ENCODE measurements at regions of chr3 and their contacts with region 1.

Region 1: DNA sequence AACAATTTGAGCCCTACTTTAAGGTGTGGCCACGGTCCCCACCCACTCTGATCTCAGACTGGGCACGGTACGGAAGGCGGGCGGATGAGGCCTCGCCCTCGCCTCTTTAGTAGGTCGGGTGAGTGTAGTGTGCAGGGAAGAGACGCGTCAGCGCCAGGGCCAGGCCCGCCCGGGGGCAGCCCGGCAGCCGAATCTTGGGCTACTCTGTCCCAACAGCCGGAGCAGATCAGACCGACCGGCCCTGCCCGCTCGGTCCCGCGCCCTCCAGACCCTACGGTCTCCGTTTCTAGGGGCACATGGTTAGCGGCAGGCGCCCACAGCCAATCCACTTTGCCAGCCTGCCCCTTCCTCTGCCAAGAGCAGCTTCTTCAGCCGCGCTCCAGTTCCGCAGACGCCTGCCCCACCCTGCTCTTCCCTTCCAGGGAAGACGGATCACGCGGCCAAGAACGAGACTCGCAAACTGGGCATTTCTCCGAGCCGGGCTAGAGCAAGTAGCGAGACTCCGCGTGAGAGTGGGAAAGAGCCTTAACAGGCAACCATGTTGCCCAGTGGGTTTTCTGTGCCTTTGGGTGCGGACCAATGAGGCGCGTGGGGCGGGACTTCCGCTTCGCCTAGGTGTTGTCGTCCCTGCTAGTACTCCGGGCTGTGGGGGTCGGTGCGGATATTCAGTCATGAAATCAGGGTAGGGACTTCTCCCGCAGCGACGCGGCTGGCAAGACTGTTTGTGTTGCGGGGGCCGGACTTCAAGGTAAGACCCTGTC is at the start of gene RNF13:
- H3K4me3 Mint-ChIP-seq: peak within 1 kb of the TSS; percentile 79
- H3K27ac Mint-ChIP-seq: peak within 1 kb of the TSS; percentile 96
- H3K4me1 Mint-ChIP-seq: peaks cover 32% of the 10 kb centered on the region
- H3K27me3 Mint-ChIP-seq: no peaks in the 10 kb centered on the region

Region 2: GRCh38 chr3:149145974-149146373 is 666.8 kb before region 1 on chr3:
- intact Hi-C with region 1: loop called (anchors 10 kb)
- H3K4me3 Mint-ChIP-seq: no peak overlapping the region
- H3K27ac Mint-ChIP-seq: no peak overlapping the region
- H3K4me1 Mint-ChIP-seq: peaks cover 22% of the 10 kb centered on the region
- H3K27me3 Mint-ChIP-seq: no peaks in the 10 kb centered on the region

Region 3: DNA sequence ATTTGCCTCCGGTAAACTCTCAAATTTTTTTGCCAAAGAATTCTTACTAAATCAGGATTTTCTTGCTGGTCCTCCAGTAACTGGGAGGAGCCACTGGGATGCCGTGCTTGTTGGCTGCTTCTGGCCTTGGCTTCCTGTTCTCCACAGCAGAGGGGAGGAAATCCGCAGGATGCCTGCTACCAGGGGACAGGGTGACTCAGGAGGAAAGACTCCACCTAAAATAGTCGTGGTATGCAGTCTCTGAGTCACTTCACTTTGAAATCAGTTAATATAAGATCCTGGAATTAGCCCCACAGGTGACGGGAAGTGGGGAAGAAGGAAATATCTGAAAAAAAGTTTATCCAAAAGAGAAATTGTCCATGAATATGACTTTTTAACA is 472.9 kb before region 1 on chr3:
- intact Hi-C with region 1: no loop called
- H3K4me3 Mint-ChIP-seq: no peak overlapping the region
- H3K27ac Mint-ChIP-seq: no peak overlapping the region
- H3K4me1 Mint-ChIP-seq: peaks cover 26% of the 10 kb centered on the region
- H3K27me3 Mint-ChIP-seq: no peaks in the 10 kb centered on the region

Region 4: DNA sequence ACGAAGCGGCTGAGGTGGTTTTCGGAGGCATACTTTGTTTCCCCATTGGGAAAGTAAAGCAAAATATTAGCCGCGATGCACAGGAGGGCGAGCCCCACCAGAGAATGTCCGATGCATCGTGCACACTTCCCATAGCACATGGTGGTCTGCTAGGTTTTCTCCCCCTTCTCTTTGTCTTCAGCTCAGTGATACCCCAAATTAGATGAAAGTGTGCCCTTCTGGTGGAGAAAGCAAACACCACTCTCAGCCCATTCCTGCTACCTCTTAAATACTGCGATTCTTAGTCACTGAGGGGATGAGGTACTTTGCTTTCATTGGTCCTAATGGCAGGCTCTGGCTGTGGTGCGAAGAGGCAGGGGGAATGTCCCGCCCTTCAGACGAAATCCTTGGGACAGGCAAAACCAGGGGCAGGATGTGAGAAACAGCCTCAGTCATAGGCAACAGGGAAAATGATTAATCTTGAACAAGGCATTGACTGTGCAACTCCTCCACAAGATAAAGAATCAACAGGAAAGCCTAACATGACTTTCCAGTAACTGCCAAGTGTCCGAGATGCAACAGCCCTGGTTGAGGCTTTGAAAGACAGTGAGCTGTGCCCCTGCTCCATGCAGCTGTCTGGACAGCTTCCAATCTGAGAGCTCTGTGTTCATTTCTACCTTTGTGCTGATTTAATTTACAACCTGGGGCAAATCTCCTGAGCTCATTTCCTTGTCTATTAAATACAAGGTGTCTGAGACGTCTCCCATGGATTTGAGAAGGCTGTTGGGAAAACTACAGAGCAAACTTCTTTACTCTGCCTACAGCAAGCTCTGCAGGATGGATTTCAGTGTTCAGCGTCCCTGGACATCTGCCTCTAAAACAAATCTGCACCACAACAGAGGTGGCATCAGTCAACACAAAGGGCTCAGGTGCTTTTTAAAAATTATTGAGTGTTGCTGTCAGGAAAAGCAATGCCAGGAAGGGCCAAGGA is 435.1 kb before region 1 on chr3 and contains the start of gene TM4SF1:
- intact Hi-C with region 1: no loop called
- H3K4me3 Mint-ChIP-seq: peak within 1 kb of the TSS; percentile 13
- H3K27ac Mint-ChIP-seq: no peak within 1 kb of the TSS
- H3K4me1 Mint-ChIP-seq: peaks cover 33% of the 10 kb centered on the region
- H3K27me3 Mint-ChIP-seq: peaks cover 3% of the 10 kb centered on the region

Region 5: GRCh38 chr3:149736175-149736952 is 76.4 kb before region 1 on chr3:
- intact Hi-C with region 1: no loop called
- H3K4me3 Mint-ChIP-seq: no peak overlapping the region
- H3K27ac Mint-ChIP-seq: no peak overlapping the region
- H3K4me1 Mint-ChIP-seq: no peaks in the 10 kb centered on the region
- H3K27me3 Mint-ChIP-seq: peaks cover 2% of the 10 kb centered on the region

Region 6: GRCh38 chr3:149752051-149752787 is 60.6 kb before region 1 on chr3 and contains the start of gene COMMD2:
- intact Hi-C with region 1: loop called (anchors 5 kb)
- H3K4me3 Mint-ChIP-seq: peak within 1 kb of the TSS; percentile 94
- H3K27ac Mint-ChIP-seq: peak within 1 kb of the TSS; percentile 95
- H3K4me1 Mint-ChIP-seq: peaks cover 6% of the 10 kb centered on the region
- H3K27me3 Mint-ChIP-seq: no peaks in the 10 kb centered on the region

Region 7: DNA sequence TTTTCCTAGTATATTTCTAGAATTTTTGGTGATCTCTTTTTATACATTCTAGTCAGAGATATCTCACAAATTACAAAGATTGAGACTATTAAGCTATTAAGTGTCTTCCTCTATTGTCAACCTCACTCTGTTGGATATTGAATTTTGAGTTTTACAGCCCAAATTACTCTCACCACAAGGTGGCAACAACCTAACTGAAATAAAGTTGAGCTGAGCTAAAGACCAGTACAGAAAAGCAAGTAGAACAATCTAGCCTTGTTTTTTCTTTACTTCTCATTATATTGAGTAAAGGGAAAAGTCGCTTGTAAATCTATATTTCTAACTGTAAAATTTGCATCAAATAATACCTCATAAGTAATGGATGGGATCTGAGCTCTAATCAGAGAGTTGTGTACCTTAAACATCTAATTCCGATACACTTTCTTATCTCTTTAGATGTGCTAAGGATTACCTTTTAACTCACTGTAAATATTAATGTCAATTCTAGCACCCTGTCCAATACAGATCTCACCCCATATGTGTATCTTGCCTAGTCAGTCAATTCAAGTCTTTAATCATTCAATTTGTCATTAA is 46.9 kb before region 1 on chr3:
- intact Hi-C with region 1: loop called (anchors 1 kb)
- H3K4me3 Mint-ChIP-seq: no peak overlapping the region
- H3K27ac Mint-ChIP-seq: no peak overlapping the region
- H3K4me1 Mint-ChIP-seq: peaks cover 5% of the 10 kb centered on the region
- H3K27me3 Mint-ChIP-seq: peaks cover 10% of the 10 kb centered on the region

Region 8: GRCh38 chr3:149783576-149783975 is 29.2 kb before region 1 on chr3:
- intact Hi-C with region 1: loop called (anchors 5 kb)
- H3K4me3 Mint-ChIP-seq: peak overlapping the region; percentile 59
- H3K27ac Mint-ChIP-seq: peak overlapping the region; percentile 91
- H3K4me1 Mint-ChIP-seq: peaks cover 41% of the 10 kb centered on the region
- H3K27me3 Mint-ChIP-seq: no peaks in the 10 kb centered on the region